Naive thymus-derived CD8-positive, alpha-beta T cell (primary cell): ENCODE measurements at regions of chr20 and their contacts with region 1.

Region 1: DNA sequence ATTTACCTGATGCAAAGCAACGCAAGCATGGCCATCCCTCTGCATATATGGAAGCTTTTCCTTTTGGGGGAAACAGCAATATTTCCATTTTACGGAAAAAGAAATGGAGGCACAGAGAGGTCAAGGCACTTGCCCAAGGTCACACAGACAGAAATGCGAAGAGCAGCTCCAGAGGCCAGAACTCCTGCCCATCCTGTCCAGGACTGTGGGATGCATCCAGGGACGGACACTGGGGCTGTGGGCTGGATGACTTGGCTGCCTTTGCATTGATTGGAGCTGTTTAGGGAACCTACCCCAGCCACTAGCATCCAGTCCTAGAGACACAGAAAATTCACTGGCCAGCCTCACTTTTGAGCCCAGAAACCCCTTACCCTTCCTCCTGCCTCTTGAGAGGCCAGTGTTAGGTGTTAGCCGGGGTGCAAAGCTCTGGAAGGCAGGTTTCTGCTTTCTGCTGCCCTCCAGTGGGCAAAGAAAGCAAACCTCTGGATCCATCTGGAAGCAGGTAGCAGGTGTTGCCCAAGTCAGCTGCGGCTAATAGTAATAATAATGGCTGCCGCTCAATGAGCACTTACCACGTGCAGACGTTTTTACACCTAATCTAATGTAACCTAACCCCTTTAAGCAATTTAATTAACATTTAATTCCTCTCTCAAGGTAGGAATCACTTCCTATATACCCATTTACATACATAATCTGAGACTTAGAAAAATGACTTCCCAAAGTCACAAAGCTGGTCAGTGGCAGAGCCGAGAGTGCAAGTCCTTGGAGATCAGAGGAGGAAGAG is 31.7 kb upstream of the CCN5 start:
- DNase-seq: peak in 8 of 10 donors; percentile 24 to 77 (median 48)
- ATAC-seq: peak; percentile 70 to 92
- H3K4me3 Mint-ChIP-seq: no peak overlapping the region
- H3K27ac Mint-ChIP-seq: peak overlapping the region in 4 of 10 donors; percentile 12 to 72 (median 28)
- H3K4me1 Mint-ChIP-seq: peaks cover 6 to 16% (median 8%) of the 10 kb centered on the region in 4 donors
- H3K27me3 Mint-ChIP-seq: peaks cover 0 to 2% (median 0%) of the 10 kb centered on the region in 5 donors

Region 2: DNA sequence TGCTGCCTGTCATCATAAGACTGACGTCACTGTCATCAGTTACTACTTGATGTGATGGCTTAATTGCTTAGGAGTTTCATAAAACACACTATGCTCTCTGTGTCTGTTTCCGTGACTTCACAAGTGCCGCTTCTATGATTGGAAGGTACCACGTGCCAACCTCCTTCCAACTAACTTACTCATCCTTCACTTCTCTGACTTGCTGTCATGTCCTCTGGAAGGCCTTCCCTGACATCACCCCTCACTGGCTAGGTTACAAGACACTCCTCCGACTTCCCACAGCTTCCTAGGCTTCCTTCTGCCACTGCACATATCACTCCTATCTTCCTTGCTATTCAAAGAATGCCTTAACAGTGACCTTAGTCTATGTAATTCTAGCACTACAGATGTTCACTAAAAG is 182.0 kb before region 1 on chr20:
- POLR2A ChIA-PET with region 1: no interaction called
- DNase-seq: no peak
- ATAC-seq: no peak
- H3K4me3 Mint-ChIP-seq: no peak overlapping the region
- H3K27ac Mint-ChIP-seq: peak overlapping the region in 6 of 10 donors; percentile 3 to 86 (median 36)
- H3K4me1 Mint-ChIP-seq: peaks cover 0 to 22% (median 9%) of the 10 kb centered on the region in 4 donors
- H3K27me3 Mint-ChIP-seq: no peaks in the 10 kb centered on the region

Region 3: DNA sequence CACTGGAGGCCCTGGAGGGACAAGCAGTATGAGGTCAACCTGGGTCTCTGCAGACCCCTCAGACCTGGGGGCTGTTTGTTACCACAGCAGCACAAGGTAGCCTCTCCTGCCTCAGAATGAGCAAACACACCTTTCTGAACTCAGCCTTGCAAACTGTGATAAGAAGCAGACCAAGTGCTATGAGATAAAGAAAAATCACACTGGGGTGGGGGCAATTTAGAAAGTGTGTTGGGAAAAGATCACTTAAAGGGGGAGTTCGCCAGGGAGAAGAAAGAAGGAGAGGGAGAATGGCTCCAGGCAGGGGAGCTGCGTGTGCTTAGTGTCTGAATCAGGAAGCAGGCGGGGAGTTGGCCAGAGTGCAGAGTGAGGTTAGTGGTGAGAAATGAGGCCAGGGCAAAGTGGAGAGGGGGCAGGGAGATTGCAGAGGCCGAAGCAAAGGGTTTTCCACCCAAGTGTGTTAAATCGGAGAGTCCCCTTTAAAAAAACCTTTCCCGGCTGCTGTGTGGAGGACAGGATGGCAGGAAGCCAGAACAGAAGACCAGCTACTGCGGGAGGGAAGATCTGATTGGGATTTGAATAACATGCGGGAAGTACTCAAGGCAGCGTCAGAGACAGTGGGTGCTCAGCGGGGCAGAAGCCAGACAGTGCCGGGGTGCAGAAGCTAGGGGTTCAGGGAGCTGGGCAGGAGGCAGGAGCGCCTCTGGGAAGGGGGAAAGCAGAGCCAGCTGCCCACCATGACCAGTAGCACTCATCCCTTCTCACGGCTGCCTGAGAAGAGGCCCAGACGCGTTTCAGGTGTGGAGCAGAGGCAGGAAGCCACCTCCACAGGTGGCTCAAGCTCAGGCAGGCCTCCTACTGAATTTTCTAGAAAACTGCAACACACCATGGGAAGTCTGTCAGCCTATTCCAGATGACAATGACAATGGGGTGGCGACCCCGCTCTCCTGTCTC is 41.0 kb before region 1 on chr20:
- POLR2A ChIA-PET with region 1: interaction called, 13 read pairs
- DNase-seq: peak in 5 of 10 donors; percentile 16 to 49 (median 39)
- ATAC-seq: peak; percentile 43 to 48
- H3K4me3 Mint-ChIP-seq: peak overlapping the region; percentile 38 to 83 (median 67)
- H3K27ac Mint-ChIP-seq: peak overlapping the region; percentile 91 to 100 (median 96)
- H3K4me1 Mint-ChIP-seq: peaks cover 45 to 78% (median 71%) of the 10 kb centered on the region in 4 donors
- H3K27me3 Mint-ChIP-seq: no peaks in the 10 kb centered on the region

Region 4: DNA sequence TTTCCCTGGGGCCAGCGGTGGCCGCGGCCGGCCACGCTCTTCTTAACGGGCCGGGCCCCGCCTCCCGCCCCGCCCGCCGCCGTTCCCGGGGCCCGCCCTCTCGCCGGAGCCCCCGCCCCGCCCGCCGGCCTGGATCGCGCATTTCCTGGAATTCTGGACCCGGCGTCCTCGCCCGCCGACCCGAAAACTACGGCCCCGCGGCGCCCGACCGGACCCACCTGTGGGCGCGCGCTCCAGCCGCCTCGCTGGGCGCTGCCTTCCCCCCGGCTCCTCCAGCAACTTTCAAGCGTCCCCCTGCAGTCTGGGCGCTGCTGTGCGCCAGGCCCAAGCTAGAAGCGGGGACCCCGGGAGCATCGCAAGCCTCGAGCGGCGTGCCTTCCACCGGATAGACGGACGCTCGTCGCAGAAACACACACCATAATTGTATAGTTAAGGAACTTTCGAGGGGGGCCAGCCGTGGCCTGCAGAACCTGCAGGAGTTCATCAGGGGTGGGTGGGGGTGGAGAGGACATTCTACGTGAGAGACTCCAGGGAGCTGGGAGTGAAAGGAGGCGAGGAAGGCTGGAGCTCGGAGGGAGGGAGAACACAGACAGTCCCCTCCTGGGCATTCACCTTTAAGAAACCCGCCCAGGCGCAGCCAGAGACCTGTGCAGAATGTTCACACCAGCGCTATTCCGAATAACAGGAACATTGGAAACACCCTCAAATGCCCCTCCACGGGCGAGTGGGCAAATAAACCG is 31.6 kb before region 1 on chr20 and contains the start of gene ADA:
- POLR2A ChIA-PET with region 1: interaction called, 10 read pairs
- DNase-seq: peak; percentile 21 to 71 (median 51)
- ATAC-seq: peak; percentile 76 to 80
- H3K4me3 Mint-ChIP-seq: peak within 1 kb of the TSS; percentile 82 to 96 (median 92)
- H3K27ac Mint-ChIP-seq: peak within 1 kb of the TSS; percentile 85 to 100 (median 92)
- H3K4me1 Mint-ChIP-seq: peaks cover 18 to 56% (median 52%) of the 10 kb centered on the region in 4 donors
- H3K27me3 Mint-ChIP-seq: peaks cover 0 to 2% (median 0%) of the 10 kb centered on the region in 5 donors
- polyA plus RNA-seq, gene ADA: 31.2 to 47.1 (median 38.2) TPM